Heart left ventricle (tissue), 16 donors: ENCODE measurements at regions of chr7 and their contacts with region 1.

Region 1: DNA sequence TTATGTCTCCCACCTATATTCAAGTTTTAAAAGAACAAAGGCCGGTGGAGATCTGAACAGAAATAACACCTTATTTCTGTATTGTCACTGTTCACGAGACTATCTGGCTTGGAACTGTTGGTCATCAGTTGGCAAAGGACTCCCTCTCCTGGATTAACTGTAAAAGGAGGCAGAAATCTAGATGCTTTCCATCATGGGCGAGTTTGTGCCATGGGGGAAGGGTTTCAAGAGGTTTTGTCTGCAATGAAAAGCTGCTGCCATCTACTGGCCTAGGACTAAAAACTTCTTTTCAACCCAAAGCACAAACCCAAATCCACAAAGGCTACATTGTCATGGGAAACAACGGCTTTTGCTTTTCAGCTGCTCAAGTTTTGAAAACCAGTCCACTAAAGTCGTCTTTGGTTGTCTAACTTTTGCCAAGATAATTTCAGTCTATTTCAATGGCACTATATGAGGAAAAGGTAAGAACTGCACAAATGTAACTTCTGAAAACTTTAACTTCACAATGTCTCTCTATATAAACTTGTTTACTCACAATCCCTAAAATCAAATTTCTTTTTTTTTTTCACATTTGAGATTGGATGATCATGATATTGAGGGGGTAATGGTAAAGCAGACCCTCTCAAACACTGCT is 196.8 kb downstream of the SKAP2 start:
- DNase-seq: peak in 4 of 5 donors; percentile 30 to 64 (median 51)
- ATAC-seq: peak in 3 of 4 donors; percentile 75 to 83 (median 79)
- H3K4me3 ChIP-seq: no peak overlapping the region
- H3K27ac ChIP-seq: no peak overlapping the region
- H3K4me1 ChIP-seq: peaks cover 0 to 9% (median 0%) of the 10 kb centered on the region in 12 donors
- H3K27me3 ChIP-seq: peaks cover 0 to 45% (median 4%) of the 10 kb centered on the region in 9 donors
- CTCF ChIP-seq: peak; percentile 62 to 83 (median 72)
- POLR2A ChIP-seq: no peak

Region 2: GRCh38 chr7:25908154-25908949 is 759.3 kb before region 1 on chr7:
- intact Hi-C with region 1: loop called in 1 of 10 experiments (anchors 5 kb)
- DNase-seq: no peak
- ATAC-seq: no peak
- H3K4me3 ChIP-seq: no peak overlapping the region
- H3K27ac ChIP-seq: no peak overlapping the region
- H3K4me1 ChIP-seq: no peaks in the 10 kb centered on the region
- H3K27me3 ChIP-seq: peaks cover 0 to 49% (median 2%) of the 10 kb centered on the region in 9 donors
- CTCF ChIP-seq: no peak
- POLR2A ChIP-seq: no peak

Region 3: GRCh38 chr7:26078437-26079336 is 588.9 kb before region 1 on chr7:
- intact Hi-C with region 1: loop called in 3 of 10 experiments (anchors 10 kb)
- DNase-seq: peak; percentile 25 to 83 (median 54)
- ATAC-seq: peak; percentile 58 to 83 (median 78)
- H3K4me3 ChIP-seq: no peak overlapping the region
- H3K27ac ChIP-seq: no peak overlapping the region
- H3K4me1 ChIP-seq: peaks cover 0 to 5% (median 0%) of the 10 kb centered on the region in 12 donors
- H3K27me3 ChIP-seq: peaks cover 4 to 85% (median 33%) of the 10 kb centered on the region in 9 donors
- CTCF ChIP-seq: peak in 10 of 12 donors; percentile 13 to 47 (median 32)
- POLR2A ChIP-seq: no peak

Region 4: DNA sequence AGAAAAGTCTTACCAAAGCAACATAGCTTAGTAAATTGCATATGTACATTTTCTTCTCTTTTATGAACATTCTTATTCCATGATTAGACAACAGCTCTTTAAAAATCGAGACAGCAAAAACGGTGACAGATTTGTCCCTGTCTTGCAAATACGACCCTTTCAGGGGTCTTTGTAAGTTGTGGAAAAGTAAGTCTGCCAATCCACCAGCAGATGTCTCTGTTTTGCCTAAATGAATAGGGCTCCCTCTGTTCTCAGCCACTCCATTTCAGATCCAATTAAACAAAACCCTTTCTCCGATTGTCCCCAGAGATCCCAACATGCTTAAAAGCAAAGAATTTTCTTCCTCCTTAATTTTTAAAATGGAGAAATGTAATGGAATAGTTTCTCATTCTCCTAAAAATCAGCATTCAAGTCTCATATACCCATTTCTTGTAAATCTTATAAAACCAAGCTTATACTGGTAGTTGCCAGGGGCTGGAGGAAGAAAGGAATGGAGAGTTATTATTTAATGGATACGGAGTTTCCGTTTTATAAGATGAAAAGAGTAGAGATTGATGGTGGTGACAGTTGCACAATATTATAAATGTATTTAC is 576.6 kb before region 1 on chr7:
- intact Hi-C with region 1: loop called in 7 of 10 experiments (anchors 5 to 10 kb)
- DNase-seq: no peak
- ATAC-seq: peak in 3 of 4 donors; percentile 45 to 64 (median 51)
- H3K4me3 ChIP-seq: peak overlapping the region in 1 of 12 donors; percentile 4
- H3K27ac ChIP-seq: no peak overlapping the region
- H3K4me1 ChIP-seq: peaks cover 0 to 6% (median 0%) of the 10 kb centered on the region in 12 donors
- H3K27me3 ChIP-seq: peaks cover 0 to 6% (median 0%) of the 10 kb centered on the region in 9 donors
- CTCF ChIP-seq: peak; percentile 47 to 75 (median 63)
- POLR2A ChIP-seq: no peak

Region 5: DNA sequence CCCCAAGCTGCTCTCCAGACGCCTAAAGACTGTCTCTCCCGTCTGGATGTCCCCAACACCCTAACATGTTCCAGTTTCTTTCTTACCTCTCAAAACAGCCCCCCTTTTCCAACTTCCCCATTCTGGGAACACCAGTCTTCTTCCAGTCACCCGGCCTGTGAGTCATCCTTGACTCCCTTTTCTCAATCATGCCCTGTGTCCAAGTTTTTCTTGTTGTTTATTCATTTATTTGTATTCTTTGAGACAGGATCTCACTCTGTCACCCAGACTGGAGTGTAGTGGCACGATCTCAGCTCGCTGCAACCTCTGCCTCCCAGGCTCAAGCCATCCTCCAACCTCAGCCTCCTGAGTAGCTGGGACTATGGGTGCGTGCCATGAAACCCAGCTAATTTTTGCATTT is 360.4 kb before region 1 on chr7:
- intact Hi-C with region 1: no loop called
- DNase-seq: no peak
- ATAC-seq: peak in 1 of 4 donors; percentile 50
- H3K4me3 ChIP-seq: no peak overlapping the region
- H3K27ac ChIP-seq: peak overlapping the region in 1 of 12 donors; percentile 90
- H3K4me1 ChIP-seq: peaks cover 0 to 60% (median 0%) of the 10 kb centered on the region in 12 donors
- H3K27me3 ChIP-seq: peaks cover 0 to 10% (median 0%) of the 10 kb centered on the region in 9 donors
- CTCF ChIP-seq: no peak
- POLR2A ChIP-seq: no peak

Region 6: GRCh38 chr7:26365077-26365900 is 302.3 kb before region 1 on chr7:
- intact Hi-C with region 1: loop called (anchors 1 to 5 kb)
- DNase-seq: peak in 2 of 5 donors; percentile 31 to 40
- ATAC-seq: peak; percentile 47 to 87 (median 84)
- H3K4me3 ChIP-seq: no peak overlapping the region
- H3K27ac ChIP-seq: no peak overlapping the region
- H3K4me1 ChIP-seq: peaks cover 0 to 15% (median 0%) of the 10 kb centered on the region in 12 donors
- H3K27me3 ChIP-seq: peaks cover 0 to 44% (median 12%) of the 10 kb centered on the region in 9 donors
- CTCF ChIP-seq: peak; percentile 36 to 84 (median 74)
- POLR2A ChIP-seq: no peak